Activated CD4-positive, alpha-beta memory T cell treated with anti-CD3 and anti-CD28 coated beads for 36 hours (primary cell): ENCODE measurements at regions of chr6 and their contacts with region 1.

Region 1: DNA sequence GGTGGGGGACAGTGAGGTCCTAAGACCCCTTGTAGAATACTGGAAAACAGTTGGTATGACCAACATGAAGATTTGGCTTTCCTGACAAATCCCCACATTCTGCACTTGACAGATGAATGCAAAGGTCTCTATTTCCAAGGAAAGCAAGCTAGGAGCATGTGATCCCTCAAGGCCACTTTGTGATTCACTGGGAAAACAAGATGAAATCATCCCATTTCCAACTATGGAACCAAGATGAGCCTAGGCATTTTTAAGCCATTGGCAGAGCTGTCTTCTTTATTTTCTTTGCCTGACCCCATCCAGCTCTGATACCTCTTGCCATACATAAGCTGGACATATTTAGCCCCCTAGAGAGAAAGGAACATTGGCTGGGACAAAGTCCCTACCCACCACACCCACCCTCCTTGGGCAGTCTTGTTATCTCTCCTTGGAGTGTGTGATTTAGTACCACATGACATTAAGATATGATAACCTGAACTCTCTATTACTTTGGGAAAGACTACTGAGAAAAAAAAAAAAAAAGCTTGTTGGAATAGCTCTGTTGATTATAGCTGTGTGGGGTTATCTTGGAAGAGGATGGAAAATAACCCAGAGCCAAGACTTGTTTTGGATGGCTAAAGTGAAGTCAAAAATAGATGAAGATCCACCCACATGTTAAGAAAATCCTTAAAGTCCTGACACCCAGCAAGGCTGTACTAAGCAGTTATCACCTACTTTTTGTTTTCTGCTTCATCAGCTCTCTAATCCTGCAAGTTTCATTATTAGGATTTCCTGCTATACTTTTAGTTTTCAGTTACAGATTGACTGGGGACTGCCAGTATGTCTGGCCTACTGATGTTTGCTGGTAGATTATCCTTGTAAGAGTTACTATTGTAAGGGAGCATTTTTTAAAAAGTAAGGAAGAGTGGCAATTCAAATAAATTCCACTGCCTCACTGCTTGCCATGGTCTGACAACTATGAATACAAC is 90.1 kb upstream of the PREP start:
- DNase-seq: no peak
- H3K4me3 Mint-ChIP-seq: no peak overlapping the region
- H3K27ac Mint-ChIP-seq: peak overlapping the region; percentile 44
- H3K4me1 Mint-ChIP-seq: peaks cover 15% of the 10 kb centered on the region
- H3K27me3 Mint-ChIP-seq: no peaks in the 10 kb centered on the region

Region 2: DNA sequence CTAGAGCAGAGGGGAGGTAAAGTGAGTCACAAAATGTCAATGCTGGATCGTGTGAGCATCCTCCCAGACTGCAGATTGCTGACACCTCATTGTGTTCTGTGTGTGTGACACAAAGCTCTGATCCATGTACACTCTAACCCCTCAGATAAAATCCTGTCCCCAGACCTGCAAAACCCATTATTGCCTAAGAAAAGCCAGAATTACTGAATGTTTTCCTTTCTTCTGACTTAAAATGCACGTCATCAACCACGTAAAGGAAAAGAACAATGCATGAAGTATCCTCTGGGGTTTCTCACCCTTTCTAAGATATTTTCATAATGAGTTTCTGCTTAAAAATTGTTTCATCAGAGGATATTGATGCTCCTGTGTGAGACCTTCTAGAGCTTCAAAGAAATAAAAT is 127.9 kb after region 1 on chr6:
- CTCF ChIA-PET with region 1: no interaction called
- POLR2A ChIA-PET with region 1: no interaction called
- intact Hi-C with region 1: loop called (anchors 5 kb)
- DNase-seq: peak; percentile 47
- H3K4me3 Mint-ChIP-seq: no peak overlapping the region
- H3K27ac Mint-ChIP-seq: peak overlapping the region; percentile 81
- H3K4me1 Mint-ChIP-seq: peaks cover 19% of the 10 kb centered on the region
- H3K27me3 Mint-ChIP-seq: peaks cover 5% of the 10 kb centered on the region